Dorsolateral prefrontal cortex (tissue), 120 donors: ENCODE measurements at regions of chr3 and their contacts with region 1.

Region 1: DNA sequence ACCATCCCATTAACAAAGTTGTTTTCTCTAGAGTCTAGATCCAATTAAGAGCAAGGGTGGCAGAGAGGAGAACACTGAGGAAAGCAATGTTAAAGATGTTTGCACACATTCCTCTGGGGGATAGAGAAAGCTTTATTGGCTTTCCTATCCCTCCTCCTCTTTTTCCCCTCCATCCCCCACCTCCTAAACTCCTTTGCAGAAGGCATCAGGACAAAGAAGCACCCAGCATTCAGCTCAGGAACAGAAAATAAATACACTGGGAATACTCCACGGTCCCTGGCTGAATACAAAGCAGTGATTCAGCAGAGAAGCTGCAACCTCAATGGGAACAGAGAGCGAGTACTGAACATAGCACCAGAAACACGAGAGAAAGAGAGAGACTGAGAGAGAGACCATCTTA is 21.9 kb downstream of the LSAMP start:
- DNase-seq: peak in 2 of 10 donors; percentile 47 to 64
- H3K4me3 ChIP-seq: peak overlapping the region in 57 of 59 donors; percentile 1 to 63 (median 34)
- H3K27ac ChIP-seq: peak overlapping the region; percentile 25 to 94 (median 85)
- H3K27me3 ChIP-seq: no peaks in the 10 kb centered on the region
- CTCF ChIP-seq: peak in 3 of 56 donors; percentile 5 to 9 (median 8)

Region 2: GRCh38 chr3:115913069-115913674 is 510.2 kb before region 1 on chr3:
- intact Hi-C with region 1: no loop called
- DNase-seq: no peak
- H3K4me3 ChIP-seq: no peak overlapping the region
- H3K27ac ChIP-seq: no peak overlapping the region
- H3K27me3 ChIP-seq: no peaks in the 10 kb centered on the region
- CTCF ChIP-seq: peak in 49 of 56 donors; percentile 13 to 57 (median 40)

Region 3: GRCh38 chr3:116440196-116440595 is 16.8 kb after region 1 on chr3:
- intact Hi-C with region 1: loop called (anchors 2 kb)
- DNase-seq: no peak
- H3K4me3 ChIP-seq: no peak overlapping the region
- H3K27ac ChIP-seq: no peak overlapping the region
- H3K27me3 ChIP-seq: no peaks in the 10 kb centered on the region
- CTCF ChIP-seq: no peak

Region 4: DNA sequence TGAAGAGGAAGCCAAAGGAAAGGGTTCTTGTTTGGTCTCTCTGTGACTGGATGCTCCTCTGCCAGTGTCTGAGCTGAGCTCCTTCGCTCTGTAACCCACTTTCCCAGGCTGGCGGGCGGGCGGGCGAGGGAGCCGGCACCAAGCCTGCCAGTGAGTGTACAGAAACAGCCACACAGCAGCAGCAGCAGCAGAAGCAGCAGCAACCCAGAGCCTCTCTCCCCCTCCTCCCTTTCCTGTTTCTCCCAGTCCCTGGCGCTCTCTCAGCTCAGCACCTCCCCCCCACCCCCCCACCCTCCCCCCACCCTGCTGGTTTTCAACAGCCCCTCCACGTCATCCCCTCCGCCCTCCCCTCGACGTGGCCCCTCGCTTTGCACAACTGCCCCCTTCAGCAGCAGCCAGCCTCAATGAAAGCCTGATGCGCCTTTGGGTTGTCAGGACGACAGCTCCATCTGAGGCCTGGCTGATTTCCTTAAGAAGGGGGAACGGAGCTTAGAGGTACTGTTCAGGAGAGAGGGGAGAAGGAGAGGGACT is 22.0 kb after region 1 on chr3 and contains the start of gene LSAMP:
- intact Hi-C with region 1: loop called (anchors 2 kb)
- DNase-seq: peak; percentile 60 to 88 (median 77)
- H3K4me3 ChIP-seq: peak within 1 kb of the TSS; percentile 48 to 84 (median 71)
- H3K27ac ChIP-seq: peak within 1 kb of the TSS; percentile 80 to 97 (median 92)
- H3K27me3 ChIP-seq: no peaks in the 10 kb centered on the region
- CTCF ChIP-seq: peak in 2 of 56 donors; percentile 0 to 5
- total RNA-seq, gene LSAMP: 116 to 277 (median 204) TPM

Region 5: GRCh38 chr3:116552246-116552645 is 128.9 kb after region 1 on chr3:
- intact Hi-C with region 1: no loop called
- DNase-seq: no peak
- H3K4me3 ChIP-seq: no peak overlapping the region
- H3K27ac ChIP-seq: no peak overlapping the region
- H3K27me3 ChIP-seq: no peaks in the 10 kb centered on the region
- CTCF ChIP-seq: no peak